Stomach (tissue), 19 donors: ENCODE measurements at regions of chr11 and their contacts with region 1.

Region 1: GRCh38 chr11:116835791-116836631 is 1.4 kb downstream of the APOA1 start:
- DNase-seq: peak; percentile 91 to 96
- H3K4me3 ChIP-seq: peak overlapping the region; percentile 35 to 53 (median 38)
- H3K27ac ChIP-seq: peak overlapping the region; percentile 53 to 88 (median 81)
- H3K4me1 ChIP-seq: peaks cover 19 to 48% (median 44%) of the 10 kb centered on the region in 4 donors
- H3K27me3 ChIP-seq: no peaks in the 10 kb centered on the region
- CTCF ChIP-seq: peak in 5 of 7 experiments; percentile 42 to 81 (median 61)
- EP300 ChIP-seq: no peak
- POLR2A ChIP-seq: no peak

Region 2: GRCh38 chr11:116657842-116658825 is 177.9 kb before region 1 on chr11:
- intact Hi-C with region 1: no loop called
- DNase-seq: no peak
- H3K4me3 ChIP-seq: no peak overlapping the region
- H3K27ac ChIP-seq: no peak overlapping the region
- H3K4me1 ChIP-seq: no peaks in the 10 kb centered on the region
- H3K27me3 ChIP-seq: peaks cover 0 to 46% (median 0%) of the 10 kb centered on the region in 3 donors
- CTCF ChIP-seq: no peak
- EP300 ChIP-seq: no peak
- POLR2A ChIP-seq: no peak

Region 3: DNA sequence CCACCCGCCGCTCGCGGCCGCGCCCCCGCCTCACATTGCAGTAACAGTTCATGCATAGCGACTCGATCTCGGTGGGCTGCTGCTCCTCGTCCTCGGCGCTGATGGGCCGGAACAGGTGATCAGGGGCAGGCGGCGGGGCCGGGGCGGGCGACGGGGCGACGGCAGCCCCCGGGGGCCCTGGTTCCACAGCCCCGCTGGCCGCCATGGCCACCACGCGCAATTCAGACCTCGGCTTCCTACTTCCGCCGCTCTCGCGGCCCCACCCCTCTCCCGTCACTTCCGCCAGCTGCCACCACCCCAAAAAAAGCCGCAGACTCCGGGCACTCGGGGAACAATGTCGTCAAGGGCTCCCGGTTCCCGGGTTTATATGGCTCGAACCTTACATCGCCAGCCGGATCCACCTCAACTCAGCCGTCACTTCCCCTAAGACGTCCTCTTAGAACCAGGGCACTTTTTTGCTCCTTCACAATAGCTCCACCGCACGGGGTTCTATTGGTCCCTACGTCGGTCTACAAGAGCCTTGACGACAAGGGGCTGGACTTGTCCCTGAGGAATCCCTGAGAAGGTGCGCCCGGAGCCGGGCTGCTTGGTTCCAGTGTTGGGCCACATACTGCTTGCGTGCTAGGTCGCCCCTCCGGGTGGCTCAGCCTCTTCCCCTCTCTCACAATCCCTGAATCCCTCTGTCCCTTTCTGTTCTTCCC is 48.1 kb before region 1 on chr11 and contains the start of gene ZPR1:
- intact Hi-C with region 1: loop called (anchors 5 kb)
- DNase-seq: peak; percentile 89 to 95
- H3K4me3 ChIP-seq: peak within 1 kb of the TSS; percentile 78 to 99 (median 94)
- H3K27ac ChIP-seq: peak within 1 kb of the TSS; percentile 75 to 96 (median 91)
- H3K4me1 ChIP-seq: peaks cover 11 to 42% (median 37%) of the 10 kb centered on the region in 4 donors
- H3K27me3 ChIP-seq: no peaks in the 10 kb centered on the region
- CTCF ChIP-seq: peak in 1 of 7 experiments; percentile 6
- EP300 ChIP-seq: no peak
- POLR2A ChIP-seq: peak in 1 of 4 donors; percentile 66
- total RNA-seq, gene ZPR1: 19.3 to 54.9 (median 25.7) TPM